ENCODE measurements at regions of chr17 and their contacts with region 1.

Region 1: GRCh38 chr17:41860254-41860931 is 4.8 kb downstream of the KLHL11 start:
- DNase-seq: no peak
- ATAC-seq: no peak
- H3K4me3 ChIP-seq: no peak overlapping the region
- H3K27ac ChIP-seq: no peak overlapping the region
- H3K4me1 ChIP-seq: peaks cover 5 to 53% (median 37%) of the 10 kb centered on the region in 9 donors
- H3K27me3 ChIP-seq: no peaks in the 10 kb centered on the region
- CTCF ChIP-seq: no peak

Region 2: GRCh38 chr17:41811549-41812380 is 48.6 kb before region 1 on chr17 and contains the start of gene P3H4:
- intact Hi-C with region 1: loop called in 1 of 10 experiments (anchors 2 kb)
- DNase-seq: peak; percentile 68 to 83
- ATAC-seq: peak; percentile 76 to 89 (median 86)
- H3K4me3 ChIP-seq: peak within 1 kb of the TSS; percentile 38 to 97 (median 74)
- H3K27ac ChIP-seq: peak within 1 kb of the TSS; percentile 17 to 82 (median 74)
- H3K4me1 ChIP-seq: peaks cover 6 to 35% (median 31%) of the 10 kb centered on the region in 9 donors
- H3K27me3 ChIP-seq: peaks cover 0 to 32% (median 0%) of the 10 kb centered on the region in 7 donors
- CTCF ChIP-seq: peak; percentile 46 to 87 (median 72)
- total RNA-seq, gene P3H4: 2.0 to 7.5 (median 3.8) TPM